Cardiac septum (tissue), 1 donor: ENCODE measurements at regions of chr1 and their contacts with region 1.

Region 1: DNA sequence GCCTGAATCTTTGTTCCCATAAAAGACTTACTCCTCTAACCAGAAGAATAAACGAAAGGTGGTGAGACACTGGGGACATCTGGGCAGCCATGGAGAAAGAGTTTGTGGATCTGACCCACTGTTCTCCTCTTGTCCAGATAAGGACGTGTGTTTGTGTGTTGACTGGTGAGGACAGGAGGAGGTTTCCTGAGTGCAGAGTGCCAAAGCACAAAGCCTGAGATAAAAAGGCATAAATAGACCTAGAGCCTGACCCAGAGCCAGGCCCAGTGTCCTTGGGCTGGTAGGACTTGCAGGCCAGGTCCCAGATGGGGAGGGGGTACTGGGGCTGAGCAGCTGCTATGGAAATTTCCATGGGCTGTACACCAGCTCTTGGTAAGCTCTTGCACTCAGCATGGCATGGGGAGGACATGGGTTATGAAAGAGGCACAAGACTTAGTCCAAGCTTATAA is 19.6 kb upstream of the COQ8A start:
- DNase-seq: peak; percentile 81

Region 2: DNA sequence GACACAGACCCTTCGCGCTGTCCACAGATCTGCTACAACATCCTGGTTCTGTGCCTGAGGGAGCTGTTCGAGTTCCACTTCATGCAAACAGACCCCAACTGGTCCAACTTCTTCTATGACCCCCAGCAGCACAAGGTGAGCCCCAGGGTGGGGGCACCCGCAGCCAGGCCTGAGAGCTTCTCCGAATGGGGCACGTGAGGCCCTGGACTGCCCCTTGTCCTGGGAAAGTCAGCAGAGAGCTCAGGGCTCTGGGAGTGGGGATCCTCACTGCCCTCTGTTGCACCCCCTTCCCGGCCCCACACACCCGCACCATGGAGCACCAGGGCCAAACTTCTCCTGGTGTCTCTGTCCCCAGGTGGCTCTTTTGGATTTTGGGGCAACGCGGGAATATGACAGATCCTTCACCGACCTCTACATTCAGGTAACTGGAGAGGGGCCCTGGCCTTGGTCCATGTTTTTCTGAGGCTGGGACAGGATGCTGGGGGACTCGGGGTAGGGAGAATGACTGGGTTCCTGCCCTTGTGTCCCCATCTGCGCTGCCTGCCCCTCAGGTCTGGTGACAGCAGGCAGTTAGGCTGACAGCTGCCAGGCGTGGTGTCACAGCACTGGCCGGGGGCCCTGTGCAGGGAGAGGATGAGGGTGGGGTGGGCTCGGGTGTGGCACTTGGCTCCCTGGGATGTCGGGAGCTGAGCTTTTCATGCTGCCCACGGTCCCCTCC is 64.2 kb after region 1 on chr1:
- intact Hi-C with region 1: loop called (anchors 2 kb)
- DNase-seq: no peak

Region 3: DNA sequence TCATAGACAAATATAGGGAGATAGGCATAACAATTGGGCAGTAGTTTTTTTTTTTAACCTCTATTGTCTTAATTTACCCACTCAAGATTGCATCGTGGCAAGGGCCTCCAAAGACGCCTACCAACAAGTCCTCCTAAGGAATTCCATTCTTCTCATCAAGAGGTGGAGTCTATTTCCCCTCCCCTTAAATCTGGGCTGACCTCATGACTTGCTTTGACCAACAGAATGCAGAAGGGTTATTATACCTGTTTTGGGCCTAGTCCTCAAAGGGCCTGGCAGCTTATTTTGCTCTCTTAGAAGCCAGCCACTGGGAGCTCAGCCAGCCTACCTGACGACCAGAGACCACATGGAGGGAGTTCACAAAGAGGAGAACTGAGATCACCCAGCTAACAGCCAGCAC is 111.9 kb after region 1 on chr1:
- intact Hi-C with region 1: no loop called
- DNase-seq: no peak